IMR-90 (cell line): ENCODE measurements at regions of chr1 and their contacts with region 1.

Region 1: GRCh38 chr1:9292361-9293240 is at the start of gene SPSB1:
- DNase-seq: peak; percentile 78
- ATAC-seq: peak; percentile 65
- H3K4me3 ChIP-seq: peak within 1 kb of the TSS; percentile 99
- H3K27ac ChIP-seq: peak within 1 kb of the TSS; percentile 82
- H3K4me1 ChIP-seq: peaks cover 27% of the 10 kb centered on the region
- H3K27me3 ChIP-seq: no peaks in the 10 kb centered on the region
- CTCF ChIP-seq: peak; percentile 6; the same call in 1 of the 2 replicates
- POLR2A ChIP-seq: peak; percentile 98
- RAD21 ChIP-seq: no peak; the same call in 1 of the 2 replicates
- total RNA-seq, gene SPSB1: 15.0 and 16.7 TPM in 2 replicates

Region 2: DNA sequence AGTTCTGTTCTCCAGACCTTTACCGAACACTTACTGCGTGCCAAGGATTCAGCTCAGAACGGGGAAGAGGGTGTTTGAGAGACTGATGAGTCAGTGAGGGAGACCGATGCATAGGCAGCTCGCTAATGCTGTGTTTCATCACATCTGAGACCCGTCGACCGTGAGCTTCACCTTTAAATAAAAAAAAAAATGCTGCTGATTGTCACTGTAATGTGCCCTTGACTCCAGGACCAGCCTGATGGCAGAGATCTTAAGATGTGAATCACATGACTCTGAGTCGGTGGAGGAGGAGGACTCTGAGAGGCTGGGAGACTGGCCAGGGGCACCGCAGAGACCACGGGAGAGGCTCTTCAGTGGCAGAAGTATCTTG is 28.9 kb after region 1 on chr1:
- CTCF ChIA-PET with region 1: interaction called, 3 read pairs
- POLR2A ChIA-PET with region 1: interaction called, 17 read pairs
- dilution Hi-C with region 1: no loop called
- in situ Hi-C with region 1: no loop called
- intact Hi-C with region 1: loop called (anchors 2 kb)
- DNase-seq: peak; percentile 91
- ATAC-seq: peak; percentile 79
- H3K4me3 ChIP-seq: peak overlapping the region; percentile 21; the same call in 1 of the 2 replicates
- H3K27ac ChIP-seq: peak overlapping the region; percentile 85
- H3K4me1 ChIP-seq: peaks cover 47% of the 10 kb centered on the region
- H3K27me3 ChIP-seq: no peaks in the 10 kb centered on the region
- CTCF ChIP-seq: no peak
- POLR2A ChIP-seq: no peak
- RAD21 ChIP-seq: no peak

Region 3: GRCh38 chr1:9455487-9456234 is 163.1 kb after region 1 on chr1:
- CTCF ChIA-PET with region 1: interaction called, 18 read pairs
- POLR2A ChIA-PET with region 1: no interaction called
- dilution Hi-C with region 1: no loop called
- in situ Hi-C with region 1: loop called (anchors 10 kb)
- intact Hi-C with region 1: loop called (anchors 1 kb)
- DNase-seq: peak; percentile 56
- ATAC-seq: peak; percentile 92
- H3K4me3 ChIP-seq: no peak overlapping the region
- H3K27ac ChIP-seq: no peak overlapping the region
- H3K4me1 ChIP-seq: no peaks in the 10 kb centered on the region
- H3K27me3 ChIP-seq: peaks cover 8% of the 10 kb centered on the region
- CTCF ChIP-seq: peak; percentile 89
- POLR2A ChIP-seq: no peak
- RAD21 ChIP-seq: peak; percentile 94

Region 4: GRCh38 chr1:9573723-9574122 is 281.1 kb after region 1 on chr1:
- CTCF ChIA-PET with region 1: no interaction called
- POLR2A ChIA-PET with region 1: no interaction called
- dilution Hi-C with region 1: no loop called
- in situ Hi-C with region 1: no loop called
- intact Hi-C with region 1: loop called (anchors 1 kb)
- DNase-seq: peak; percentile 25
- ATAC-seq: no peak
- H3K4me3 ChIP-seq: no peak overlapping the region
- H3K27ac ChIP-seq: no peak overlapping the region
- H3K4me1 ChIP-seq: no peaks in the 10 kb centered on the region
- H3K27me3 ChIP-seq: no peaks in the 10 kb centered on the region
- CTCF ChIP-seq: peak; percentile 47
- POLR2A ChIP-seq: no peak
- RAD21 ChIP-seq: peak; percentile 53